Naive thymus-derived CD8-positive, alpha-beta T cell (primary cell): ENCODE measurements at regions of chr7 and their contacts with region 1.

Region 1: DNA sequence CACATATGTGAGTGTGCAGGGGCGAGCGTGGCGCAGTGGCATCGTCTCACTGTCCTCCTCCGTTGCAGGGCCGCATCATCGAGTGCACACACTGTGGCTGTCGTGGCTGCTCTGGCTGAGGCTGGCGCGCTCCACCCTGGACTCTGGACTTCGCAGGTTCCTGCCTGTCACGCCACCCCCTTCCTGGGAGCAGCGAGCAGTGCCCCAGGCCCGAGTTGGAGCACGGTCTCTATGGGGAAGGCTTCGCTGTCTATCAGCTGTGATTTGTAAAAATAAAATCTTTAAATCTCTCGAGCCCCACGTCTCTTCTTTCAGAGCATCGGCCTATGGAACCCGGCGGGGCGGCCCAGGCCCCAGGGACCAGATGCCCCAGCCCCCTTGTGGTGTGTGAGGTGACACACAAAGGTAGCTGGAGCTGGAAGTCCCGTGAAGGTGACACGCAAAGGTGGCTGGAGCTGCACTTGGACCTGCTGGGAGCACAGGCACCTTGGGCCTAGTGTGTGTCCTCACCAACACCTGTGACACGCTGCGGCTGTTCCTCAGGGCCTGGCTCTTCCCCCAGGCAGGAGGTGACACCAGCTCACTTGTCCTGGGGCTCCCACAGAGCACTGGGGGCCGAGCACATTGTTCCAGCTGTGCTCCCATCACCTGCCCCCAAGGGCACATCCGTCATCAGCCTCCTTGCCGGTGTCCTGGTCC is 10.7 kb downstream of the BUD31 start:
- DNase-seq: peak in 1 of 10 donors; percentile 60
- ATAC-seq: peak in 1 of 2 donors; percentile 30
- H3K4me3 Mint-ChIP-seq: no peak overlapping the region
- H3K27ac Mint-ChIP-seq: peak overlapping the region in 2 of 10 donors; percentile 25 to 33
- H3K4me1 Mint-ChIP-seq: peaks cover 1 to 9% (median 8%) of the 10 kb centered on the region in 4 donors
- H3K27me3 Mint-ChIP-seq: no peaks in the 10 kb centered on the region

Region 2: GRCh38 chr7:99514050-99514449 is 94.6 kb after region 1 on chr7:
- POLR2A ChIA-PET with region 1: no interaction called
- DNase-seq: no peak
- ATAC-seq: no peak
- H3K4me3 Mint-ChIP-seq: no peak overlapping the region
- H3K27ac Mint-ChIP-seq: no peak overlapping the region
- H3K4me1 Mint-ChIP-seq: peaks cover 3 to 26% (median 10%) of the 10 kb centered on the region in 4 donors
- H3K27me3 Mint-ChIP-seq: no peaks in the 10 kb centered on the region

Region 3: DNA sequence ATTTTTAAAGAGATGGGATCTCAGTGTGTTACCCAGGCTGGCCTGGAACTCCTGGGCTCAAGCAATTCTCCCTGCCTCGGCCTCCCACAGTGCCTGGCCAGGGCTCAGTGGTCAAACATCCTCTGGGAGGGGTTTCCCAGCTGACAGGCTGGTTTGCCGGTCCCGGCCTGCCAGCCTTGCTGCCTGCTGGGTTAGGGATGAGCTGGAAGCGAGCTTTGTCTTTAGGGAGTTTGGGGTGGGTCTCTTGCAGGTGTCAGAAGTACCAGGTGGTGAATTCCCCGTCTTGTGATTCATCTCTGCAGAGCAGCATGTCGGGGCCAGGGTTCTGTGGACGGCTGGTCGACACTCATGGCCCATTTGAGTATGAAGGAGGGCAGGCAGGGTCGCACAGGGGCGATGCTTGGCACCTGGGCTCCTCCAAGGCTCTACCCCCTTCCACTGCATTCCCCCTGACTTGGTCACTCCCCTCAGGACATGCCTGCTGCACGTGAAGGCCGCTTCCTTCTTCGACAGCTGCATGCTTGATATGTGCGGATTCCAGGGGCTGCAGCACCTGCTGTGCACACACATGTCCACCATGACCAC is 1344.2 kb after region 1 on chr7:
- POLR2A ChIA-PET with region 1: interaction called, 10 read pairs
- DNase-seq: no peak
- ATAC-seq: no peak
- H3K4me3 Mint-ChIP-seq: no peak overlapping the region
- H3K27ac Mint-ChIP-seq: no peak overlapping the region
- H3K4me1 Mint-ChIP-seq: peaks cover 0 to 2% (median 0%) of the 10 kb centered on the region in 4 donors
- H3K27me3 Mint-ChIP-seq: peaks cover 0 to 6% (median 2%) of the 10 kb centered on the region in 5 donors